ENCODE measurements at regions of chr1 and their contacts with region 1.

Region 1: GRCh38 chr1:209207701-209208286 is 375.7 kb upstream of the CAMK1G start:
- DNase-seq: peak; percentile 26 to 80 (median 56)
- ATAC-seq: peak; percentile 91 to 98 (median 97)
- H3K4me3 ChIP-seq: peak overlapping the region in 1 of 4 donors; percentile 14
- H3K27ac ChIP-seq: no peak overlapping the region
- H3K4me1 ChIP-seq: no peaks in the 10 kb centered on the region
- H3K27me3 ChIP-seq: peaks cover 0 to 17% (median 3%) of the 10 kb centered on the region in 4 donors
- CTCF ChIP-seq: peak; percentile 13 to 51 (median 48)

Region 2: DNA sequence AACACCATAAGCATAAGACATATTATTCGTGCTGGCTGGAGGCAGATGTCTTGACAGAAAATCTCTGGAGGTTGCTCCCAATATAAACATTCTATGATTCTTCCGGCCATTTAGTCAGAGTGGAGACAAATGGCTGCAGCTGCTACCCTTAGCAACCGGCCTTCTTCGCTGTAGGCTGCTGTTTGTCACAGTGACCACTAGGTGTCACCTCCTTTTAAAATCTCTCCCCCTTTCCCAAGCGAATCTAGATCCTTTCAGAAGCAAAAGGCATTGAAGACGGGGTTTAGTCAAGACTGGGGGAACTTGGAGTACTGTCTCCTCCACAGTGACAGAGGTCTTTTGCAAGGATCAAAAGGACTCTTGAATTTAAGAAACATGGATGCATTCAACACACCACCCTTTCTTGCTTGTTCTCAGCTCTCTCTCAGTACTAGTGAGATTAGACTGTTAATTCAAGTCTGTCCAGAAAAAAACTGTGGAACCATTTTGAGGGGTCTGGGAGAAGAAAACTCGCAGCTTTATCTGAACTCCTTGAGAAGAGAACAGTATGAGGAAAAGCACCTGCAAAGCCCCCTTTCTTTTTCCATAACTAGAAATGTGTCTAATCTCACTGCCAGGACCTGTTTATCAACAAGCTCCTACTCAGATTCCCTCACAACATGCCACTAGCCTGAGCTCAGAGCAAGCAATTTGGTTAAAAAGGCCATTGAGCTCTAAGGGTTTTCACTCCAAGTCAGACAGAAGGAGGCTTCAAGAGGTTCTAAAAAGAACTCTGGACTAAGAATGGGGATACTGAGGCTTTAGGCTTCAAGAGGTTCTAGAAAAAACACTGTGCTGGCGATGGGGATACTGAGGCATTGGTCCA is 555.3 kb before region 1 on chr1:
- intact Hi-C with region 1: loop called in 1 of 3 experiments (anchors 10 kb)
- DNase-seq: peak in 5 of 6 donors; percentile 22 to 67 (median 29)
- ATAC-seq: peak; percentile 81 to 99 (median 97)
- H3K4me3 ChIP-seq: no peak overlapping the region
- H3K27ac ChIP-seq: no peak overlapping the region
- H3K4me1 ChIP-seq: no peaks in the 10 kb centered on the region
- H3K27me3 ChIP-seq: peaks cover 0 to 7% (median 1%) of the 10 kb centered on the region in 4 donors
- CTCF ChIP-seq: peak; percentile 77 to 83 (median 80)

Region 3: DNA sequence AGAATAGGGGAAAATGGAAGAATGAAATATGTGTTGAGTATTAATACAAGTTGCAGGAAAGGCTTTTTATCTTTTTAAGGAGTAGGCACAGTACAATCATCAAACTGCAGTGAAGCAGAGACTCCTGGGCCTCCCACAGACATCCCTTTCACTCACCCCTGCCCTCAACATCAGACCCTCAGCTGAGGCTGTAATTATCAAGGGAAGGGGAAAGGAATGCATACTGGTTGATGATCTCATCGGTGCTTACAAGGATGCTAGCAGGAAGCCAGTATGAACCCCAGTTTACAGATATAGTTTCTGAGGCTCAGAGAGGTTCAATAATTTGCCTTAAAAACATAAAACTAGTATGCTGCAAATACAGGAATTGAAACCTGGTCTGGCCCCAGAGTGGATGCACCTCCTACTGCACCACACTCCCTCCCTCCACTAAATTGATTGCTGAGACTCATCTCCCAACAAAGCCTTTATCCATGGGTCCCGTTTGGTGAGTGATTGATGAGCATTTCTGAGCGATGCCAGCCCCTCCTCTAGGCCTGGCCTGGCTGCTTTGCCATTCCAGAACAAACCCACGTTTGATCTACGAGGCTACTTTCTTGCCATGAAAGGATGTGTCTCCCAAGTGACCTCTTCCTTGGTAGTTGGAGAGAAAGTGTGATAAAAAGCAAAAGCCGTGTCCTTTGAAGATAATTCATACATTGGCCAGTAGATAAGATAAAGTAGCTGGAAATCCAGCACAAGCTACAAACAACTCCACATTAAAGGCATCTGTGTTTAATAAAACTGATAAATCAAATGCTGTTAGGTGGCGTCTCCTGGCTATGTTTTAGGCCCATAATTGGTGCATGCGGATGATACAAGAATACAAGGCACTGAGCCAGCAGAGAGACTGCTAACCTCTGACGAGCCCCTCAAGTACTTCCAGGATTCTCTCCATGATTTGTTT is 141.8 kb after region 1 on chr1:
- intact Hi-C with region 1: no loop called
- DNase-seq: no peak
- ATAC-seq: no peak
- H3K4me3 ChIP-seq: no peak overlapping the region
- H3K27ac ChIP-seq: no peak overlapping the region
- H3K4me1 ChIP-seq: no peaks in the 10 kb centered on the region
- H3K27me3 ChIP-seq: no peaks in the 10 kb centered on the region
- CTCF ChIP-seq: no peak

Region 4: DNA sequence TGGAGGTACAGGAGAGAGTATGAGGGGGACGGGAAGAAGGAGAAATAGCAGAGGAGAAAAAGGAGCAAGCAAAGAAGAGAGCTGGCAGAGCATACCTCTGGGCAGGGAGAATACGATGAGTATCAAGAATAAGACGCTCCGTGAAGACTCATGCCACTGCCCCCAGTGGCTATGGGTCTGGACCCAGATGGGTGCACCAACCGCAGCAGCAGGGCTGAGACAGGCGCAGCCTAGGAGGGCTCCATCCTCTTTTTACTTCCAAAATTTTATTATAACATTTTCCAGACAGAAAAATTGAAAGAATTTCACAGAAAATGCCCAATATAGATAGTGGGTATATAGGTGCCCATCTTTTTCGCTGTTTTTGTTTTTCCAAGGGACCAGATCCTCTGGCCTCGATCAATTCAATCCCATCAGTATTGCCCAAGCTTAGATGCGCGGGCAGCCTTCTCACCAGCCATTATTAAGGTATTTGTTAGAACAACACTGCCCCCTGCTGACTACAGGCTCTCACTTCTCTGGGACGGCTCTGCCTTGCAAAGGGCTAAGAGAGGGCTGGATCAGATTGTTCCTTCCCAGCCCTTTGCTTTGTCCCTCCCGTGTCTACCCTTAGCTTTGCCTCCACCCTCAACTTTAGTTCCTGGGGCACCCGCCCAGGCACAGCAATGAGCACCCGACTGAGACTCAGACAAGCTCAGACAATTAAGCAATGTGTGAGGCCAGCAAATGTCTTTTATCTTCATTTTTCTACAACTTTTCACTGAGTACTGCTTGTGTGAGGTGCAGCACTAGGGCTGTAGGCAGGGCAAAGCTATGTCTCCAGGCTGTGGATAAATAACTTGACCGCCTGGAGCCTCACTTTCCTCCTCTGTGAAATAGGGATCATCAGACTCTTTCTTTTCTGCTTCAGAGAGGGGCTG is 358.2 kb after region 1 on chr1:
- intact Hi-C with region 1: loop called in 2 of 3 experiments (anchors 5 to 10 kb)
- DNase-seq: peak; percentile 67 to 86 (median 82)
- ATAC-seq: peak; percentile 89 to 97 (median 92)
- H3K4me3 ChIP-seq: no peak overlapping the region
- H3K27ac ChIP-seq: no peak overlapping the region
- H3K4me1 ChIP-seq: no peaks in the 10 kb centered on the region
- H3K27me3 ChIP-seq: peaks cover 0 to 6% (median 0%) of the 10 kb centered on the region in 4 donors
- CTCF ChIP-seq: peak; percentile 70 to 78 (median 74)

Measured in pancreas (tissue), 10 donors.